ENCODE measurements at regions of chr10 and their contacts with region 1.

Region 1: DNA sequence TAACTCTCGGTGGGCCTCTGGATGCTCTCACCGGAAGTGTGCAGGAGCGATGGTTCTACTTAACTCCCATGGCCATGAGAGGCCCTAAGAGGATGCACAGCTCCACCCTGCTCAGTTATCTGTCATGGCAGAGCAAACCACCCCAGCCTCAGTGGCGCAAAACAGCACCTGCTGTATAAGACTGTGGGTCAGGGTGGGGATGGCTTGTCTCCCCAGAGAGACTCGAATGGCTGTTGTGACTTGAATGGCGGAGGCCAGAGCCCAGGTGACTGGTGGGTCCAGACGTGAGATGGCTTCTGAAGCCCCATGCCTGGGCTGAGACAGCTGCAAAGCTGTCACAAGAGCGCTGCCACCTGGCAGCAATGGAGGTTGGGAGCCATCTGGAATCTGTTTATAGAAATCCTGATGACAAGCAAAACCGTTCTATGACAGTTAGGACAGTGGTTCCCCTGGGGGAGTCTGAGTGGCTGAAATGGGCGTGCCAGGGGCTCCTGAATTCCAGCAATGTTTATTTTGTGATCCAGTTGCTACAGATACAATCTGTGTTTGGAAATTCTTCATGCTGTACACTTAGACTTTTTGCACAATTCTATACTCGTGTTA is 490.5 kb downstream of the TCERG1L start:
- DNase-seq: no peak

Region 2: GRCh38 chr10:130802301-130802700 is 18.7 kb before region 1 on chr10:
- intact Hi-C with region 1: loop called in 1 of 2 experiments (anchors 1 kb)
- DNase-seq: peak; percentile 24